ENCODE measurements at regions of chr7 and their contacts with region 1.

Region 1: DNA sequence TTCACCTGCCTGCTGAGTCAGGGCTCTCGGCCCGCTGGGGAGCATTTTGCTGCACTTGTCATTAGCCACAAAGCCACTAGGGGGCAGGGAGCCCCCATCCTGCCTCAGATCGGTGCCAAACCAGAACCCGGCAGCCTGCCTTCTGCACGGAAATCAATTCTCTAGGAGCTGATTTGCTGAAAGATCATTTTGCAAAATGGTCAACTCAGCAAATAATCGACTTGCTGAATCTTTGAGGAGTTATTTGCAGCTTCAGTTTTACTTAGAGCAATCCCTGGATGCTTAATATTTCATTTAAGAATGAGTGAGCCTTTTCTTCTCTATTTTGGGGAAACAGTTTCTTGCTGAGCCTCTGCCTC is 1.7 kb upstream of the GIMAP8 start:
- DNase-seq: peak; percentile 84 to 87 (median 85)
- ATAC-seq: peak; percentile 83 to 86 (median 84)
- H3K4me3 ChIP-seq: no peak overlapping the region
- H3K27ac ChIP-seq: peak overlapping the region in 1 of 3 donors; percentile 44
- H3K4me1 ChIP-seq: peaks cover 0 to 16% (median 7%) of the 10 kb centered on the region in 4 donors
- H3K27me3 ChIP-seq: no peaks in the 10 kb centered on the region
- CTCF ChIP-seq: peak; percentile 90 to 97 (median 93)
- POLR2A ChIP-seq: no peak

Region 2: GRCh38 chr7:150514748-150515222 is 66.0 kb after region 1 on chr7 and contains the start of gene GIMAP7:
- intact Hi-C with region 1: no loop called
- DNase-seq: no peak
- ATAC-seq: peak; percentile 71 to 81 (median 74)
- H3K4me3 ChIP-seq: peak within 1 kb of the TSS; percentile 29 to 44 (median 40)
- H3K27ac ChIP-seq: peak within 1 kb of the TSS; percentile 52 to 83 (median 56)
- H3K4me1 ChIP-seq: no peaks in the 10 kb centered on the region
- H3K27me3 ChIP-seq: no peaks in the 10 kb centered on the region
- CTCF ChIP-seq: no peak
- POLR2A ChIP-seq: no peak
- total RNA-seq, gene GIMAP7: 2.6 to 9.1 (median 6.0) TPM

Region 3: DNA sequence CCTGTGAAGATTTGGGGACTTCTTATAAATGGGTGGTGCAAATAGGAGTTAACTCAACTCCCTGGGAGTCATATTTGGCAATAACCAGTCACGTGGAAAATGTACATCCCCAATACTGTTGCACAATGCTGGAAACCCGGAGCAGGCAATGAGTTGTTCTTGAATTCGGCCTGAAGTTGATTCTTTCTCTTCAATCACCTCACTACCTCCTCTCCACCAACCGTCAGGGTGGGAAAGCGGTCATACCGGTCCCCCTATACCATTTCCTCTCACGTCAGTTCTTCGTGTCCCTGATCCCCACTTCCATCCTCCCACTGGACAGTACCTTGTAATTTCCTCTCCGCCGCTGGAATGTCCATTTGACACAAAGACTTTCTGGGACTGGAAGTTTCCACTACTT is 291.3 kb after region 1 on chr7:
- intact Hi-C with region 1: loop called in 1 of 2 experiments (anchors 10 kb)
- DNase-seq: no peak
- ATAC-seq: peak in 1 of 4 donors; percentile 4
- H3K4me3 ChIP-seq: peak overlapping the region; percentile 37 to 48 (median 42)
- H3K27ac ChIP-seq: peak overlapping the region; percentile 30 to 85 (median 63)
- H3K4me1 ChIP-seq: peaks cover 0 to 18% (median 3%) of the 10 kb centered on the region in 4 donors
- H3K27me3 ChIP-seq: no peaks in the 10 kb centered on the region
- CTCF ChIP-seq: no peak
- POLR2A ChIP-seq: no peak